Dorsolateral prefrontal cortex (tissue), 120 donors: ENCODE measurements at regions of chr3 and their contacts with region 1.

Region 1: DNA sequence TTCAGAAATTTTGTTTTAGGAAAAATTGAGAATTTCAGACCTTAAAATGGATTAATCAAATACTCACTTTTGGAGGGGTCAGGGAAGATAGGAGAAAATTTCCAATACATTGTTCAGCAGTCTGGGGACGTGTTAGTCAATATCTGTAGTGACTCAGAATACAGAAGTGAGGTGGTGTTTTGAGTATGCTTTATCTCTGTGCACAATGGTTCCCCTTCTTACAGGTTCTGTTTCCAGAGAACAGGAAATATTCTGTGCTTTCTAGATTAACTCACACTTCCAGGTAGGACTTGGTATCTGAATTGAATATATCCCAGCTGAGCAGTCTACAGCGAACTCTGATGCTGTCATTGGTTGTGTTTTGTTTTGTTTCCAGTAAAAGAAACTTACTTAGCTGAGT is 30.7 kb upstream of the CCDC54 start:
- DNase-seq: no peak
- H3K4me3 ChIP-seq: peak overlapping the region in 8 of 59 donors; percentile 1 to 14 (median 6)
- H3K27ac ChIP-seq: peak overlapping the region in 46 of 59 donors; percentile 3 to 86 (median 69)
- H3K27me3 ChIP-seq: no peaks in the 10 kb centered on the region
- CTCF ChIP-seq: no peak

Region 2: GRCh38 chr3:107271787-107272387 is 74.7 kb before region 1 on chr3:
- intact Hi-C with region 1: loop called in 1 of 2 experiments (anchors 10 kb)
- DNase-seq: no peak
- H3K4me3 ChIP-seq: peak overlapping the region in 11 of 59 donors; percentile 4 to 39 (median 18)
- H3K27ac ChIP-seq: peak overlapping the region in 58 of 59 donors; percentile 1 to 90 (median 72)
- H3K27me3 ChIP-seq: no peaks in the 10 kb centered on the region
- CTCF ChIP-seq: peak; percentile 63 to 94 (median 82)

Region 3: DNA sequence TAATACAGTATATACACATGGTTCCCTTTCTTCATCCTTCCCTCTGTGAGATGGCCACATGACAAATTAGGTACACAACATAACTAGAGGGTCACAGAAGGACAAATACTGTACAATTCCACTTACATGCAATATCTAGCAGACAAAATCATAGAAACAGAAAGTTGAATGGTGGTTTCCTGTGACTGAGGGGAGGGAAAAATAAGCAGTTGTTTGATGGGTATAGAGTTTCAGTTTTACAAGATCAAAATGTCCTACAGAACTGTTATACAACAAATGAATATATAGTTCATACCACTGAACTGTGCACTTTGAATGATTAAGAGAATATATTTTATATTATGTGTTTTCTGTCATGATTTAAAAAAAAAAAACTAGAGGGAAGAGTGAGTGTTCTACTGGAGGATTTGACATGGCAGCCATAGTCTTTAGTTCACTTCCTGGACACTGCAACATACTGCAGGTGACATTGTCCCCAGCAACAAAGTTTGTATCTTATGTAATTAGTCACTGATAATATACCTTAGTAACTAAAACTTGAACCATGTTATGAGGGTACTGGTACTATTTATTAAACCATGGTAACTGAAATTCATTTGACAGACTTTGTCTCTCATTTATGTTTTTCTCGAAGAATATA is 67.9 kb after region 1 on chr3:
- intact Hi-C with region 1: loop called in 1 of 2 experiments (anchors 5 kb)
- DNase-seq: no peak
- H3K4me3 ChIP-seq: no peak overlapping the region
- H3K27ac ChIP-seq: no peak overlapping the region
- H3K27me3 ChIP-seq: no peaks in the 10 kb centered on the region
- CTCF ChIP-seq: no peak

Region 4: GRCh38 chr3:107421170-107421792 is 74.7 kb after region 1 on chr3:
- intact Hi-C with region 1: loop called in 1 of 2 experiments (anchors 2 kb)
- DNase-seq: peak in 1 of 10 donors; percentile 4
- H3K4me3 ChIP-seq: peak overlapping the region in 58 of 59 donors; percentile 17 to 69 (median 52)
- H3K27ac ChIP-seq: peak overlapping the region in 46 of 59 donors; percentile 3 to 88 (median 63)
- H3K27me3 ChIP-seq: no peaks in the 10 kb centered on the region
- CTCF ChIP-seq: peak; percentile 58 to 93 (median 83)